HEK293 (cell line): ENCODE measurements at regions of chr5 and their contacts with region 1.

Region 1: GRCh38 chr5:10452768-10453331 is 11.2 kb downstream of the ROPN1L start:
- H3K4me3 ChIP-seq: no peak overlapping the region
- H3K27ac ChIP-seq: no peak overlapping the region
- H3K4me1 ChIP-seq: no peaks in the 10 kb centered on the region; the same call in 1 of the 2 replicates
- CTCF ChIP-seq: peak; percentile 74

Region 2: GRCh38 chr5:9562141-9562540 is 890.7 kb before region 1 on chr5:
- CTCF ChIA-PET with region 1: no interaction called
- POLR2A ChIA-PET with region 1: no interaction called
- H3K4me3 ChIP-seq: no peak overlapping the region
- H3K27ac ChIP-seq: no peak overlapping the region
- H3K4me1 ChIP-seq: peaks cover 3% of the 10 kb centered on the region; the same call in 1 of the 2 replicates
- CTCF ChIP-seq: no peak

Region 3: DNA sequence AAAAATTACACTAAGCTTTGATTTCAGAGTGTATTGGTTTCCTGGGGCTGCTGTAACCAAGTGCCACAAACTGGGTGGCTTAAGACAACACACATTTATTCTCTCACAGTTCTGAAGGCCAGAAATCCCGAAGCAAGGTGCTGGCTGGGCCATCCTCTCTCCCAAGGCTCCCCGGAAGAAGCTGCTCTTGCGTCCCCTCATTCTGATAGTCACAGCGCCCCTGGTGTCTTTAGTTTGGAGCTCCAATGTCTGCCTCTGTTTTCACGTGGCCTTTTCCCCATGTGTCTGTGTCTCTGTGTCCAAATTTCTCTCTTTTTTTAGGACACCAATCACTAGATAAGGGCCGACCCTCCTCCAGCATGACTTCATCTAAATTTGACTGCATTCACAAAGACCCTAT is 45.5 kb after region 1 on chr5:
- CTCF ChIA-PET with region 1: interaction called, 14 read pairs
- POLR2A ChIA-PET with region 1: no interaction called
- H3K4me3 ChIP-seq: no peak overlapping the region
- H3K27ac ChIP-seq: no peak overlapping the region
- H3K4me1 ChIP-seq: 0 out of 2 replicates have a peak, but pooled peaks cover 3% of the 10 kb centered on the region
- CTCF ChIP-seq: no peak

Region 4: GRCh38 chr5:10563945-10564837 is 111.3 kb after region 1 on chr5 and contains the start of gene ANKRD33B:
- CTCF ChIA-PET with region 1: interaction called, 30 read pairs
- POLR2A ChIA-PET with region 1: no interaction called
- H3K4me3 ChIP-seq: peak within 1 kb of the TSS; percentile 71
- H3K27ac ChIP-seq: peak within 1 kb of the TSS; percentile 88
- H3K4me1 ChIP-seq: peaks cover 16% of the 10 kb centered on the region
- CTCF ChIP-seq: no peak

Region 5: GRCh38 chr5:10592598-10592997 is 139.7 kb after region 1 on chr5:
- CTCF ChIA-PET with region 1: interaction called, 11 read pairs
- POLR2A ChIA-PET with region 1: interaction called, 3 read pairs
- H3K4me3 ChIP-seq: no peak overlapping the region
- H3K27ac ChIP-seq: no peak overlapping the region
- H3K4me1 ChIP-seq: peaks cover 26% of the 10 kb centered on the region
- CTCF ChIP-seq: no peak

Region 6: DNA sequence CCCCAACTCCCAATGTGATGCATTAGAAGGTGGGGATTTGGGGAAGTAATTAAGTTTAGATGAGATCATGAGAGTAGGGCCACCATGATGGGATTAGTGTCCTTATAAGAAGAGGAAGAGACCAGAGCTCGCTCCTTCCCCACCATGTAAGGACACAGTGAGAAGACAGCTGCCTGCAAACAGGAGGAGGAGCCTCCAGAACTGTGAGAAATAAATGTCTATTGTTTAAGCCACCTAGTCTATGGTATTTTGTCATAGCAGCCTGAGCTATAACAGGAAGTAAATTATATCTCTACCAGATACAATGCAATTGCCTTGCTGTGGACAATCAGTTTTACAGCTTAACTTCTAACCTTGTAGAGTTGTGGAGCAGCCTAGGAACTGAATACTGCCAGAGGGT is 169.0 kb after region 1 on chr5:
- CTCF ChIA-PET with region 1: interaction called, 175 read pairs
- POLR2A ChIA-PET with region 1: no interaction called
- H3K4me3 ChIP-seq: no peak overlapping the region
- H3K27ac ChIP-seq: no peak overlapping the region
- H3K4me1 ChIP-seq: peaks cover under 1% of the 10 kb centered on the region
- CTCF ChIP-seq: no peak

Region 7: DNA sequence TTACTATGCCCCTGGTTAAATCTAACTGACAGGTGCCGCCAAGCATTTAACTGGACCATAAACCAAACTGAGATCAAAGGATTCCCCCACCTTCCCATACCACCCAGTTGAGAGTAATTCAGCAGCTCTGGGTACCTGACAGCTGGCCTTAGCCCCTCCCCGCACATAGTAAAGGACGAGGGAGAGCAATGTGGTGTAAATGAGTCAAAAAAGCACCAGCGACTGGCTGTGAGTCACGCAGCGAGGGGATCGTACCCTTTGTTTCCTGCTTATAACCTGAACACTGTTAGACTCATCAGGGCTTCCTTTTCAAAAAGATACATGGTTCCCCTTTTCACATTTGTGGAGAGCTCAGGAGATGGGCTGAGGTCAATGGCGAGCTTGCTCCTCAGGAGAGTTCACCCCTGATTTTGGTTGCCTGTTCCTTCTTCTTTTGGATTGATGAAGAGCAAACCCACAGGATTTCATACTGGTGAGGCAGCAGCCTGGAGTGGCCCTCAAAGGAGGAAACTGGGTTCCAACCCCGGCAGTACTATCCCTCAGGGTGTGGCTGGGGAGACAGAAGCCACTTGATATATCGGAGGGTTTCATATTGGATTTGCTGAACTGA is 182.5 kb after region 1 on chr5:
- CTCF ChIA-PET with region 1: interaction called, 11 read pairs
- POLR2A ChIA-PET with region 1: no interaction called
- H3K4me3 ChIP-seq: no peak overlapping the region
- H3K27ac ChIP-seq: no peak overlapping the region
- H3K4me1 ChIP-seq: no peaks in the 10 kb centered on the region
- CTCF ChIP-seq: no peak